ENCODE measurements at regions of chr5 and their contacts with region 1.

Region 1: GRCh38 chr5:134140530-134141201 is 26.2 kb downstream of the TCF7 start:
- DNase-seq: no peak
- ATAC-seq: peak; percentile 77
- H3K4me3 ChIP-seq: no peak overlapping the region
- H3K27ac ChIP-seq: peak overlapping the region; percentile 37
- H3K4me1 ChIP-seq: peaks cover 40% of the 10 kb centered on the region
- H3K27me3 ChIP-seq: no peaks in the 10 kb centered on the region
- CTCF ChIP-seq: peak; percentile 86

Region 2: GRCh38 chr5:133957591-133957990 is 183.1 kb before region 1 on chr5:
- CTCF ChIA-PET with region 1: no interaction called
- POLR2A ChIA-PET with region 1: interaction called, 16 read pairs
- in situ Hi-C with region 1: no loop called
- intact Hi-C with region 1: no loop called
- DNase-seq: no peak
- ATAC-seq: no peak
- H3K4me3 ChIP-seq: no peak overlapping the region
- H3K27ac ChIP-seq: no peak overlapping the region
- H3K4me1 ChIP-seq: no peaks in the 10 kb centered on the region
- H3K27me3 ChIP-seq: no peaks in the 10 kb centered on the region
- CTCF ChIP-seq: no peak

Region 3: GRCh38 chr5:134026521-134027268 is 114.0 kb before region 1 on chr5:
- CTCF ChIA-PET with region 1: interaction called, 10 read pairs
- POLR2A ChIA-PET with region 1: no interaction called
- in situ Hi-C with region 1: no loop called
- intact Hi-C with region 1: no loop called
- DNase-seq: peak; percentile 53
- ATAC-seq: peak; percentile 93
- H3K4me3 ChIP-seq: no peak overlapping the region
- H3K27ac ChIP-seq: peak overlapping the region; percentile 64
- H3K4me1 ChIP-seq: no peaks in the 10 kb centered on the region
- H3K27me3 ChIP-seq: no peaks in the 10 kb centered on the region
- CTCF ChIP-seq: peak; percentile 83